ENCODE measurements at regions of chr5 and their contacts with region 1.

Region 1: DNA sequence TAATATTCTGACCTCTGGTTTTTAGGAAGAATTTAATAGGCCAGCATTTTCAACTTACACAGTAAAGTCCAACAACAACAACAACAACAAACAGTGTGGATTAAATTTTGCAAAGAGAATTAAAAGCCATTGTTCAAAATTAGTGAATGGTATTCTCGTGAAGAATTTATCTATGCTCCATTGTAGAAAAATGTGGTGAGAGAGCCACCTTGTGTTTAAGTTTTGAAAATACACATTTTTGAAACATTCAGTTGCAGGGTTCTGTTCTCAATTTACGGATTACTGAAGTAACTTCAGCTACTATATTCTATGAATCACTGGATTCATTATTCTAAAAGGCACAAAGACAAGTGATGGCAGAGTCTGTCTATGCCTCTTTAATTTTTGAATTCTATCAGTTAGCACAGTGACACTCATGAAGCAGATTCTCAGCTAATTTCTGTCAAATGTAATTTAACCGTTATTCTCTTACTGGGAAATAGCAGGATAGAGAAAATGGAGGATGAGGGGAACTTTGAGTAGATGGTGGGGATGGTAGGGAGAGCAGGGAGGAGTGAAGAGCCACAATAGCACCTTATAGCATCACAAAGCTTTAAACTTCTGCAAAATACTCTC is 11.0 kb downstream of the CCDC152 start:
- DNase-seq: no peak
- ATAC-seq: no peak

Region 2: GRCh38 chr5:41856644-41857491 is 910.7 kb before region 1 on chr5:
- intact Hi-C with region 1: loop called (anchors 2 kb)
- DNase-seq: no peak
- ATAC-seq: peak; percentile 75

Region 3: GRCh38 chr5:41924872-41925554 is 842.6 kb before region 1 on chr5 and contains the start of gene FBXO4:
- intact Hi-C with region 1: loop called (anchors 5 kb)
- DNase-seq: peak; percentile 94
- ATAC-seq: peak; percentile 99
- total RNA-seq, gene FBXO4: 3.6 TPM

Region 4: DNA sequence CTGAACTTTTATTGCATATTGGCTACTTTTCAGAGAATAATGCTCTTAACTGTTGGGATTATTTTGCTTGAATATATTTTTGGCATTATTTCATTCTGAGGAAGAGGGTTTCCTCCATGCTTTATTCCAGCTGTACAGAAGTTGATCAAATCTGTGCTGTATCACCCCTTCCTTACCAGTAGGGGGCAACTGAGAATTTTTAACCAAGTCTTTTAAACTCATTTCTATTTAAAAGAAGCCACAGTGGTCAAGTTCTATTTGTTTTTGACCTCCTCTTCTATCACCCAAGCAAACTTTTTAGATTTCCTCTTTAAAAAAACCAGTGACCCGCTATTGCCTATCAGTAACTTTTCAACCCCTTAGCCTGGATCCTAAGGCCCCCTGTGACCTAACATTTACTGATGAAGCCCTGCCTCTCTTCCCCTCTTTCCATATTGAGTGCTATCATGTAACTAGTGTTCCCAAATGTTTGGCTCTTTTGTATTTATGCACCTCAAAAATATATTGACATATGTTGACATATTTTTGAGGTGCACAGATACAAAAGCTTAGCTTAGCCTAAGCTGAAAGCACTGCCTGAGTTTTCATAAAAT is 761.9 kb before region 1 on chr5:
- intact Hi-C with region 1: loop called (anchors 2 kb)
- DNase-seq: no peak
- ATAC-seq: no peak

Region 5: DNA sequence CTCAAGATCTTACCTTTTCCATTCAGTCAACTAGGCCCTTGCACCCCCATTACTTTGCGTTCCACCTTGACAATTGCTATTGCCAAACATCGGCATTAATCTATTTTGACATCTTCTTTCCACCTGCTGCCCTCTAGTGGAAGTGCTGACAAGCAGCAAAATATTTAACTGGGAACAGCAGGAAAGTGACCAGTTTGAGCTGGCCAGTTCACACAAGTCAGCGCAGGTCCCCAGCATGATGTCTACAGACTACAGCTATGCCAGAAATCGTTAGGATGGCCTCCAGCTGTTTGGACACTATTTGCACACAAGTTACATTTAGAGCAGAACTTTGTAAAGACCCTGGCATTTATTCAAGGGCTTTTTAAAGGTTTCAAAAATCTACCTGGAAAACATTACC is 184.3 kb before region 1 on chr5:
- intact Hi-C with region 1: loop called (anchors 10 kb)
- DNase-seq: peak; percentile 65
- ATAC-seq: peak; percentile 70

Region 6: GRCh38 chr5:42889311-42889933 is 121.8 kb after region 1 on chr5:
- intact Hi-C with region 1: loop called (anchors 10 kb)
- DNase-seq: no peak
- ATAC-seq: peak; percentile 88